H1 (cell line): ENCODE measurements at regions of chr5 and their contacts with region 1.

Region 1: DNA sequence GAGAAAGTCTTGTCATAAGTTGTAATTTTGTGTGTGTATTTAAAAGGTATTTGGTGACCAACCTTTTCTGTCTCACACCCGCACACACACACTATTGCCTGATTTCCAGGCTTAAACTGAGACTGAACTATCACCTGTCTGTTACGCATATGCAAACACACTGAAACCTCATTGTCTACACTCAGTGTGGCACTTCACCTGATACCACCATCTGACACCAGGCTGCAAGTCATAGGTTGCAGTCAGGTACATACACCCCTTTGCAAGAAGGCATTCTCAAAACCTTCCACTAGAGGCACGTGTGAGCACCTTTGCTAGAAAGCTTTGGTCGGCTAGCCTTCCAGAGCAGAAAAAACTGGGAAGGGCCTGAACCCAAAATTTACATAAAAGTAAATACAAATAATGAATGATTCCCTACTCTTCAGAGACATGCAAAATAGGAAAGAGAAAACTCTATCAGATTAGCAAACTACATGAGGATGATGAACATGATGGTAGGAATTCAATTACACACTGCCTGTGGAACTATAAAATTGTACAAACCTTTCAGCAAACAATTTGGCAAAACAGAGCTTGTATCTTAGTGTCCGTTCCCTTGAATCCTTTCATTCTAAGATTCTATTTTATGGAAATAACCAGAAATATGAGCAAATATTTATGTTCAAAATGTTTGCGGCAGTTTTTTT is 5.9 kb upstream of the FOXD1 start:
- DNase-seq: peak in 1 of 2 experiments; percentile 86
- H3K4me3 ChIP-seq: no peak overlapping the region
- H3K27ac ChIP-seq: no peak overlapping the region
- H3K4me1 ChIP-seq: peaks cover 0 to 11% (median 7%) of the 10 kb centered on the region in 4 experiments; a peak in 6 of 7 replicates
- H3K27me3 ChIP-seq: peaks cover 34 to 44% (median 41%) of the 10 kb centered on the region in 4 experiments
- CTCF ChIP-seq: peak; percentile 43 to 97 (median 82)
- EP300 ChIP-seq: no peak
- POLR2A ChIP-seq: no peak
- RAD21 ChIP-seq: peak; percentile 79 to 86

Region 2: DNA sequence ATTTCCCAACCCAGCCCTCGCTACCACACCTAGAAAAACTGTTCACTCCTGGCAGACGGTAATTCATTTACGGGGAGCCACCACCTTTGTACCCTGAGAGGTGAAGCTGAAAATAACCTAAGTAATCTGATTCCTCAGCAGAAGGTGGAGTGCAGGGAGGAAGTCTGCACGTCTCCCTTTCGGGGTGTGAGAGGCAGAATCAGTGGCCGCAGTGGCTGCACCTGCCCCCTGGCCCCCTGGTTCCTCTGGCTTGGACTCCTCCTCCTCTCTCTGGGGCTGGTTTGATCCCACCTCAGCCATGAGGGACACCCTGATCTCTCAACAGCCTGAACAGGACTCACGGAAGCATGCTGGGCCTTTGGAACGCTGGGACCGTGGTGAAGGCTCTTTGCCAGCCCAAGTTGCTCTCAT is 271.0 kb before region 1 on chr5:
- CTCF ChIA-PET with region 1: no interaction called
- POLR2A ChIA-PET with region 1: no interaction called
- DNase-seq: no peak
- H3K4me3 ChIP-seq: no peak overlapping the region
- H3K27ac ChIP-seq: no peak overlapping the region
- H3K4me1 ChIP-seq: peaks cover 0 to 3% (median 0%) of the 10 kb centered on the region in 4 experiments; a peak in 1 of 7 replicates
- H3K27me3 ChIP-seq: no peaks in the 10 kb centered on the region
- CTCF ChIP-seq: no peak
- EP300 ChIP-seq: no peak
- POLR2A ChIP-seq: no peak
- RAD21 ChIP-seq: no peak

Region 3: GRCh38 chr5:73419465-73420390 is 34.8 kb before region 1 on chr5:
- CTCF ChIA-PET with region 1: interaction called, 13 read pairs
- POLR2A ChIA-PET with region 1: no interaction called
- DNase-seq: peak in 1 of 2 experiments; percentile 76
- H3K4me3 ChIP-seq: peak overlapping the region; percentile 49 to 64 (median 53)
- H3K27ac ChIP-seq: no peak overlapping the region
- H3K4me1 ChIP-seq: peaks cover 0 to 11% (median 0%) of the 10 kb centered on the region in 4 experiments; a peak in 4 of 7 replicates
- H3K27me3 ChIP-seq: peaks cover 46 to 69% (median 60%) of the 10 kb centered on the region in 4 experiments
- CTCF ChIP-seq: no peak; a peak in 1 of 4 replicates
- EP300 ChIP-seq: no peak
- POLR2A ChIP-seq: no peak
- RAD21 ChIP-seq: no peak; a peak in 1 of 4 replicates

Region 4: GRCh38 chr5:73471654-73472053 is 17.2 kb after region 1 on chr5:
- CTCF ChIA-PET with region 1: interaction called, 17 read pairs
- POLR2A ChIA-PET with region 1: no interaction called
- DNase-seq: no peak
- H3K4me3 ChIP-seq: no peak overlapping the region
- H3K27ac ChIP-seq: no peak overlapping the region
- H3K4me1 ChIP-seq: no peaks in the 10 kb centered on the region
- H3K27me3 ChIP-seq: no peaks in the 10 kb centered on the region; a peak in 1 of 7 replicates
- CTCF ChIP-seq: no peak
- EP300 ChIP-seq: no peak
- POLR2A ChIP-seq: no peak
- RAD21 ChIP-seq: no peak

Region 5: DNA sequence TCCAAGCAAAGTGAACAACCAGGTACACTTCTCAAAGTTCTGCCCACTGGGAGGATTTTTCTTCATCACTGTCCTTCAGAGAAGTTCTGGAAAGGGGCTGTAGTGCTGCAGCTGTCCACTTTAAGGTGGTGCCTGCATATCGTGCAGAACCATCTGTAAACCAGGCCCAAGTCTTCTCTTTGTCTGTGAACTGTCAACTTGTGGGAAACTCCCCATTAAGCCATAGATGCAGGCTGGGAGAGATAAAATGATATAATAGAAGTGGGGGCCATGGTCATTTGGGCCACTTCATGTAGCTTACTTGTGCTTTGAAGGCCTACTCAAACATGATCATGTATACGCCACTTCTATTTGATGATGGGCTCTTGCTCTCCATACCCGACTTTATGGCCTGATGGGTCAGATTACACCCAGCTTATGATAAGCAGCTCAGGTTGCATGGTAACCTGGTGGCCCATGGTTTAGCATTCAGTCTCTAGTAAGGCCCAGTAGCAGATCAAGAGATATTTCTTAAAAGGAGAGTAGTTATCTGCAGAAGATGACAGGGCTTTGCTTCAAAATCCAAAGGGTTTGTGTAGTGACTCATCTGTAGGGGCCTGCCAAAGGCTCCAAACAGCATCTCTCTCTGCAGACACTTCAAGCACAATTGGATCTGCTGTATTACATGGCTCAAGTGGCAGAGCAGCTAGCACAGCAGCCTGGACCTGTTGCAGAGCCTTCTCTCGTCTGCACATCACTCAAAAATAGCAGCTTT is 28.1 kb after region 1 on chr5:
- CTCF ChIA-PET with region 1: interaction called, 38 read pairs
- POLR2A ChIA-PET with region 1: interaction called, 16 read pairs
- DNase-seq: no peak
- H3K4me3 ChIP-seq: no peak overlapping the region
- H3K27ac ChIP-seq: no peak overlapping the region
- H3K4me1 ChIP-seq: peaks cover 8 to 15% (median 13%) of the 10 kb centered on the region in 4 experiments
- H3K27me3 ChIP-seq: no peaks in the 10 kb centered on the region
- CTCF ChIP-seq: no peak
- EP300 ChIP-seq: no peak
- POLR2A ChIP-seq: no peak
- RAD21 ChIP-seq: no peak

Region 6: DNA sequence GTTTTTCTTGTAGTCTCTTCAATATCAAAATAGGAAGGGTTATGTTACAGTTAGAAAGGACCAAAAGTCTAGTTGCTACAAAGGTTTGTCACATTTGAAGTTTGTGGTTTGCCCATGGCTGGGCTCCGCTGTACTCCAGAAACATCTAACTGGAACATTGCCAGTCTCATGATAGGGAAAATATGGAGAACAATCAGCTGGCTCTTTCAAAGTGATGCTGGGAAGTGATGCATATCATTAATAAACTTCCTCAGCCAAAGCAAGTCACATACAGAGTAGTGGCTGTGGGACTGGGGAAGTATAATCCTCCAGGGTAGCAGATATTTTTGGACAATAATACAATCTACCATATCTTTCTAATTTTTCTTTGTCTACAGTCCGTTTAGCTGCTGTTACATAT is 52.6 kb after region 1 on chr5:
- CTCF ChIA-PET with region 1: interaction called, 20 read pairs
- POLR2A ChIA-PET with region 1: interaction called, 7 read pairs
- DNase-seq: no peak
- H3K4me3 ChIP-seq: no peak overlapping the region
- H3K27ac ChIP-seq: no peak overlapping the region
- H3K4me1 ChIP-seq: no peaks in the 10 kb centered on the region
- H3K27me3 ChIP-seq: no peaks in the 10 kb centered on the region
- CTCF ChIP-seq: no peak
- EP300 ChIP-seq: no peak
- POLR2A ChIP-seq: peak in 1 of 2 experiments; percentile 3; a peak in 1 of 3 replicates
- RAD21 ChIP-seq: no peak

Region 7: GRCh38 chr5:73540192-73540591 is 85.7 kb after region 1 on chr5:
- CTCF ChIA-PET with region 1: interaction called, 19 read pairs
- POLR2A ChIA-PET with region 1: interaction called, 4 read pairs
- DNase-seq: no peak
- H3K4me3 ChIP-seq: no peak overlapping the region
- H3K27ac ChIP-seq: no peak overlapping the region
- H3K4me1 ChIP-seq: no peaks in the 10 kb centered on the region
- H3K27me3 ChIP-seq: no peaks in the 10 kb centered on the region
- CTCF ChIP-seq: no peak
- EP300 ChIP-seq: no peak
- POLR2A ChIP-seq: no peak
- RAD21 ChIP-seq: no peak